Tibial artery (tissue), 4 donors: ENCODE measurements at regions of chr4 and their contacts with region 1.

Region 1: DNA sequence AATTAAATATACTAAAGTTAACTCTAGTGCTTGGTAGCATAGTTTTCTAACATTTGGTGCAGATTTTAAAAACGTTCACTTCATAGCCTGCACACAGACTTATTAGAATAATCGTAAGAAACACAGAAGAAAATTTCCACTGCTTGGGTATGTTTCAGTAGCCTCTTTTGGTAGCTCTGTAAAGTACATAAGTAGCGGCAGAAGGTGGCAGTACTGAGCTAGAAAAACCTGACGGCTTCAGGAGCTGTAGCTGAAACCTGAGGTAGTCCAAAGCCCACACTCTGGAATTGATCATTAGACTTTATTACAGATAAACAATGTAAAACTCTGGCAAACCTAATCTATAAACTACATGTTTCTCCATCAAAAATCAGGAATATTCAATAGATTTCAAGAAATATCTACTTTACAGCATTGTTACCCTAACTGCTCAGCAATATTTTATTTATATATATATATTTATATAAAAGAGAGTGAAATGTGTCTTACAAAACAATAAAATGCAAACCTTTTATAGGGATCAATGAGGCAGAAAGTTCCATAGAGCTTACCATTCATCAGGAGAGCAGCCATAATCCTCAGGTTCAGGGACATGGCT is 88.2 kb downstream of the ATP8A1 start:
- DNase-seq: peak in 1 of 2 donors; percentile 57
- H3K4me3 ChIP-seq: no peak overlapping the region
- H3K27ac ChIP-seq: no peak overlapping the region
- H3K4me1 ChIP-seq: peaks cover 0 to 9% (median 7%) of the 10 kb centered on the region in 4 donors
- H3K27me3 ChIP-seq: no peaks in the 10 kb centered on the region
- CTCF ChIP-seq: peak; percentile 67 to 73

Region 2: DNA sequence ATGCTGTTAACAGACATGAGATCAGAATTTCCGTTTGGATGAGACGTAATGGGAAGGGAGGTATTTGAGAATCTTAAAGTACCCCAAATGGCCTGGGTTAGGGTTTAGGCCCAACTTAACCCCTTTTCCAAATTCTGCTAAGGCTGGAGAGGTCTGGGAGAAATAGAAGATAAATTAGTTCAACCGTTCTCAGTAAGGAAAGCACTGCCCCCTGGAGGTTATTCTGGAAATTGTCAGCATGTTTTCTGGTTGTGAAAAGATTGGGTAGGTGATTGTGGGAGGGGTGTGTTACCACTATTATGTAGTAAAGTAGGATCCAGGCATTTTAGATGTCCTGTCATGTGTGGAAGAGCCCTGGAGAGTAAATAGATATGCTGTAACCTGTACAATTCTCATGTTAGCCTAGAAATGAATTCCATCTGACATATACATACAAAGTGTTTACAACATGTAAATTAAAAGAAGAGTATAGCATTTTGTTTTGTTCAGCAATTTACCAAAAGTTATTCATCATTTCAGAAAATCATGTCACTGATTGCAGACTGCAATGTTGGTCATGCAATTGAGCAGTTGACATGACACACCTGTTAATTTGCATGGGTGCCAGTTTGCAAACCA is 297.0 kb after region 1 on chr4:
- intact Hi-C with region 1: loop called (anchors 5 kb)
- DNase-seq: peak in 1 of 2 donors; percentile 45
- H3K4me3 ChIP-seq: no peak overlapping the region
- H3K27ac ChIP-seq: no peak overlapping the region
- H3K4me1 ChIP-seq: no peaks in the 10 kb centered on the region
- H3K27me3 ChIP-seq: peaks cover 0 to 5% of the 10 kb centered on the region in 2 donors
- CTCF ChIP-seq: peak; percentile 64 to 76